ENCODE measurements at regions of chr5 and their contacts with region 1.

Region 1: DNA sequence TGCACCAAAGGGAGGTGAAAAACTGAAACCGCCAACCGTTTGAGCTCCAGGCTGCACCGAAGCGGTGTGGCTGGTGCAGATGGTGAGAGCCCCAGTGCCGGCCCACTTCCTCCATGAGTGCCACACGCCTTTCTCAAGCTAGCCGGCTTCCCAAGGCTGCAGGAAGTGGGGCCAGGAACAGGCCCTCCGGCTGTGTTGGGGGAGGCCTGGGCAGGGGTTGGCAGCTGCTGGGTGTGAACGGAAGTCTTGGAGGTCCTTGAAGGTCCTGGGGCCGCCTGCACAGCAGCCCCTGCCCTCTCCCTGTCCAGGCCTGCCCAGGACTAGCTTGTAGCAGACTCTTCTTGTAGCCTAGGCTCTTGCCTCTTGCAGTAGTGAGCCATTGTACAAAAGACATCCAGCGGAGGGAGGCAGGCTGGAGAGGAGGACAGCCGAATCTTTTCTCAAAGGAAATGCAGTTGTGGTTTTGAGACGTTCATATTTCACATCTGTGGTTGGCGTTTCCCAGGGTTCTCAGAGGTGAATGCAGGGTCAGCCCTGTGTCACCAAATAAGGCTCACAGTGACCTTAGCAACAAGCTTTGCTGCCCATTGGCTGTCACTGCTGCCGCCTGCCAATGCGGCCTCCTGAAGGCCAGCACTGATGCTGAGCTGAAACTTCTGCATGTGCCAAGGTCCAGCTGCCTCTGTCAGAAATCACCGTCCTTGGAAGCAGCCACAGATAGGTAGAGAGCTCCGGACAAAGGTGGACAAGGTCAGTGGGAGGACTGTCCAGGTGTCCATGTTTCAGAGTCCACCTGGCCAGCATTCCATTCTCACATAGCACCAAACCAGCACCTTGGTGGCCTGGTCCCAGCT is 23.9 kb downstream of the IRF1 start:
- DNase-seq: peak; percentile 88
- H3K4me3 Mint-ChIP-seq: peak overlapping the region; percentile 67
- H3K27ac Mint-ChIP-seq: peak overlapping the region; percentile 91
- H3K4me1 Mint-ChIP-seq: peaks cover 95% of the 10 kb centered on the region
- H3K27me3 Mint-ChIP-seq: no peaks in the 10 kb centered on the region

Region 2: GRCh38 chr5:132410451-132411381 is 55.9 kb before region 1 on chr5:
- CTCF ChIA-PET with region 1: interaction called, 20 read pairs
- POLR2A ChIA-PET with region 1: interaction called, 68 read pairs
- DNase-seq: peak; percentile 89
- H3K4me3 Mint-ChIP-seq: peak overlapping the region; percentile 95
- H3K27ac Mint-ChIP-seq: peak overlapping the region; percentile 99
- H3K4me1 Mint-ChIP-seq: peaks cover 59% of the 10 kb centered on the region
- H3K27me3 Mint-ChIP-seq: no peaks in the 10 kb centered on the region

Region 3: GRCh38 chr5:132426525-132427138 is 40.0 kb before region 1 on chr5:
- CTCF ChIA-PET with region 1: interaction called, 111 read pairs
- POLR2A ChIA-PET with region 1: interaction called, 1,155 read pairs
- DNase-seq: peak; percentile 90
- H3K4me3 Mint-ChIP-seq: peak overlapping the region; percentile 77
- H3K27ac Mint-ChIP-seq: peak overlapping the region; percentile 99
- H3K4me1 Mint-ChIP-seq: peaks cover 98% of the 10 kb centered on the region
- H3K27me3 Mint-ChIP-seq: no peaks in the 10 kb centered on the region

Region 4: DNA sequence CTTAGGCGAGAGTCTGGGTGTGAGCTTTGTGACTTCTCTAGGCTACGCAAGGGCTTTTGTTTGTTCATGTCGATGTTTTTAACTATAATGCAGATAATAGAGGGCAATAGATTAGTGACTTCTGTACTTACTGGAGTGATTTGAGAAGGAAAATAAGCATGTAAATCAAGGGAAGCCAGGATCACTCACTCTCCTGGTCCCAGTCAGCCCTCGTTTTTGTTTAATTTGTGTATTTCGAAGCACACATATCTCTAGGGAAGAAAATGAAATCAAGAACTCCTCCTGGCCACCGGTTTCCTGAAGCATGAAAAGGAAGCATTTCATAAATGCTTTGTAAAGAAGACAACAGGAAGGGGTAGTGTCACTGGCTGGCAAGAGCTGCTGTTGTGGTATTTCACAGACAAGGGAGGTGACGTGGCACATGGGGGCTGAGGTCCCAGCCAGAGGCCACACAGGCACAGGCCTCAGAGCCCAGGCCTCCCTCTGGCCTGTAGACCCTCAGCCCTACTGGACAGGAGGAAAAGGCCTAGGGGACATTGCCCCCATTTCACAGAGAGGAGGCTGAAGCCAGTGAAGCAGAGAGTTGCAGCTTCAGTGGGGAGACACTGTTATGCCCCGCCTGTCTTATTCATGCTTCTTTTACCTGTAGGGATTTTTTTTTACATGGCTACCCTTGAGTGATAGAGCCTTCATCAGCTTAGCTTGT is 10.2 kb before region 1 on chr5:
- CTCF ChIA-PET with region 1: interaction called, 74 read pairs
- POLR2A ChIA-PET with region 1: interaction called, 563 read pairs
- DNase-seq: peak; percentile 75
- H3K4me3 Mint-ChIP-seq: peak overlapping the region; percentile 53
- H3K27ac Mint-ChIP-seq: peak overlapping the region; percentile 99
- H3K4me1 Mint-ChIP-seq: peaks cover 91% of the 10 kb centered on the region
- H3K27me3 Mint-ChIP-seq: no peaks in the 10 kb centered on the region

Region 5: GRCh38 chr5:132495667-132496190 is 29.1 kb after region 1 on chr5:
- CTCF ChIA-PET with region 1: interaction called, 33 read pairs
- POLR2A ChIA-PET with region 1: interaction called, 1,032 read pairs
- DNase-seq: peak; percentile 82
- H3K4me3 Mint-ChIP-seq: peak overlapping the region; percentile 96
- H3K27ac Mint-ChIP-seq: peak overlapping the region; percentile 91
- H3K4me1 Mint-ChIP-seq: peaks cover 76% of the 10 kb centered on the region
- H3K27me3 Mint-ChIP-seq: no peaks in the 10 kb centered on the region

Region 6: DNA sequence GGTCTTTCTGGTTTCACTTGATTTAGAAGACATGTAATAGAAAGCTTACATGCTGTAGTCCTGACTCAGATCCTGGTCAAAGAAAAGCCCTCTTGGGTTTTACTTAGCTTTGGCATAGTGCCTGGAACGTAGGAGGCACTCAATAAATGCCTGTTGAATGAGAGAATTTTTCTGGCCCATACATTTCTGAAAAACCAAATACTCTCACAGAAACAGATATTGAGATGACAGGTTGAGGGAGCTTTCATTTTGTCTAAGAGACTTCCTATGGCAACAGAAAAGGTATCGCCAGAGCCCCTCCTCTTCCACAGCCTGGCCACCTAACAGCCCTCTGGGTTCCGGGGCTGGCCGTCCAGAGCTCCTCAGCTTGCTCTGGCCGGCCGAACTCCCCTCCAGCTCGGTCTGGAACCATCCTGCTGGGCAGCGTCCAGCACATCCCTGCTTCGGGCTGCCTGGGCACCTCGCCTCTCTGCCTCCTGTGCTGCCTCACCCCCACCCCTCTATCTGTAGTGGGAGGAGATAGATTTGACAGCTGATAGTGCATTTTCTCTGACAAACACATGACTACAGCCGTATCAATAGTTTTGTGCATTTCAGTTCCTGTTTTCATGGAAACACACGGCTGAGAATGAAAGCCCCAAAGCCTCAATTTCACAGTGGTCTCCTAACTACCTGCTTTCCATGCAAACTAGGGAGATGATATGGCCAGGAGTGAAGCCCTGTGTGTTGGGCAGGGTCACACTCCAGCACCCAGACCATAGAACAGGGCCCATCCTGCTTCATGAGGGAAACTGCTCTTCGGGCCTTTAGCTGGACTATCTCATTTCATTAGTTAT is 208.2 kb after region 1 on chr5:
- CTCF ChIA-PET with region 1: no interaction called
- POLR2A ChIA-PET with region 1: no interaction called
- DNase-seq: peak; percentile 40
- H3K4me3 Mint-ChIP-seq: peak overlapping the region; percentile 68
- H3K27ac Mint-ChIP-seq: peak overlapping the region; percentile 87
- H3K4me1 Mint-ChIP-seq: peaks cover 41% of the 10 kb centered on the region
- H3K27me3 Mint-ChIP-seq: no peaks in the 10 kb centered on the region

Measured in activated CD4-positive, alpha-beta memory T cell treated with anti-CD3 and anti-CD28 coated beads, Interleukin-2, amount 10 ng/mL, durations not matched to agents 7 days and 5 days (primary cell).